Naive thymus-derived CD4-positive, alpha-beta T cell (primary cell): ENCODE measurements at regions of chr2 and their contacts with region 1.

Region 1: GRCh38 chr2:12106440-12107080 is 360.1 kb downstream of the LPIN1 start:
- DNase-seq: peak in 1 of 9 donors; percentile 40
- ATAC-seq: no peak
- H3K4me3 ChIP-seq: no peak overlapping the region
- H3K4me3 Mint-ChIP-seq: no peak overlapping the region
- H3K27ac ChIP-seq: no peak overlapping the region
- H3K27ac Mint-ChIP-seq: no peak overlapping the region
- H3K4me1 ChIP-seq: peaks cover 5 to 31% of the 10 kb centered on the region in 2 donors
- H3K4me1 Mint-ChIP-seq: peaks cover 16 to 57% (median 47%) of the 10 kb centered on the region in 7 donors
- H3K27me3 ChIP-seq: no peaks in the 10 kb centered on the region
- H3K27me3 Mint-ChIP-seq: no peaks in the 10 kb centered on the region

Region 2: GRCh38 chr2:10790228-10790979 is 1316.2 kb before region 1 on chr2:
- CTCF ChIA-PET with region 1: no interaction called
- POLR2A ChIA-PET with region 1: no interaction called
- intact Hi-C with region 1: no loop called
- DNase-seq: no peak
- ATAC-seq: peak; percentile 76
- H3K4me3 ChIP-seq: no peak overlapping the region
- H3K4me3 Mint-ChIP-seq: peak overlapping the region in 1 of 10 donors; percentile 5
- H3K27ac ChIP-seq: no peak overlapping the region
- H3K27ac Mint-ChIP-seq: peak overlapping the region in 8 of 9 donors; percentile 2 to 53 (median 34)
- H3K4me1 ChIP-seq: peaks cover 0 to 6% of the 10 kb centered on the region in 2 donors
- H3K4me1 Mint-ChIP-seq: peaks cover 0 to 18% (median 0%) of the 10 kb centered on the region in 7 donors
- H3K27me3 ChIP-seq: no peaks in the 10 kb centered on the region
- H3K27me3 Mint-ChIP-seq: no peaks in the 10 kb centered on the region

Region 3: DNA sequence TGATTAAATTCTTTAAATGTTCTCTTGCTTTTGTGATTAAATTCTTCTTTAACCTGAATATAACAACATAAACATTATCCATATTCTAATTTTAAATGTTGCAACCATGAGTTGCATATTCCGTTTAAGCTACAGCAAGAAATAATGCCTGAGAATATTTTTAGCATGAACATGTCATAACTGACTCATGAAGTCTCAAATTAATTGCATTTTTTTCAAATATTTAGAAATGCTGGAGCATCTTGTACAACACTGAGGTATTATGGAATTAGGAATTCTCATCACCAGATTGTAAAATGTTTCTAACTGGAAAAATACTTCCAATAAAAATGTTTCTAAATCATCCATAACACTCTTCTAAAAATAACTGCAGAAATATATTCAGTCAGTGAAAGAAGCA is 776.8 kb before region 1 on chr2:
- CTCF ChIA-PET with region 1: no interaction called
- POLR2A ChIA-PET with region 1: no interaction called
- intact Hi-C with region 1: no loop called
- DNase-seq: no peak
- ATAC-seq: no peak
- H3K4me3 ChIP-seq: no peak overlapping the region
- H3K4me3 Mint-ChIP-seq: no peak overlapping the region
- H3K27ac ChIP-seq: no peak overlapping the region
- H3K27ac Mint-ChIP-seq: no peak overlapping the region
- H3K4me1 ChIP-seq: no peaks in the 10 kb centered on the region
- H3K4me1 Mint-ChIP-seq: peaks cover 2 to 34% (median 29%) of the 10 kb centered on the region in 7 donors
- H3K27me3 ChIP-seq: no peaks in the 10 kb centered on the region
- H3K27me3 Mint-ChIP-seq: no peaks in the 10 kb centered on the region

Region 4: GRCh38 chr2:12096051-12096787 is 10.3 kb before region 1 on chr2:
- CTCF ChIA-PET with region 1: no interaction called
- POLR2A ChIA-PET with region 1: interaction called, 11 read pairs
- intact Hi-C with region 1: no loop called
- DNase-seq: no peak
- ATAC-seq: no peak
- H3K4me3 ChIP-seq: no peak overlapping the region
- H3K4me3 Mint-ChIP-seq: no peak overlapping the region
- H3K27ac ChIP-seq: no peak overlapping the region
- H3K27ac Mint-ChIP-seq: no peak overlapping the region
- H3K4me1 ChIP-seq: no peaks in the 10 kb centered on the region
- H3K4me1 Mint-ChIP-seq: peaks cover 0 to 12% (median 5%) of the 10 kb centered on the region in 7 donors
- H3K27me3 ChIP-seq: no peaks in the 10 kb centered on the region
- H3K27me3 Mint-ChIP-seq: peaks cover 0 to 6% (median 0%) of the 10 kb centered on the region in 5 donors

Region 5: DNA sequence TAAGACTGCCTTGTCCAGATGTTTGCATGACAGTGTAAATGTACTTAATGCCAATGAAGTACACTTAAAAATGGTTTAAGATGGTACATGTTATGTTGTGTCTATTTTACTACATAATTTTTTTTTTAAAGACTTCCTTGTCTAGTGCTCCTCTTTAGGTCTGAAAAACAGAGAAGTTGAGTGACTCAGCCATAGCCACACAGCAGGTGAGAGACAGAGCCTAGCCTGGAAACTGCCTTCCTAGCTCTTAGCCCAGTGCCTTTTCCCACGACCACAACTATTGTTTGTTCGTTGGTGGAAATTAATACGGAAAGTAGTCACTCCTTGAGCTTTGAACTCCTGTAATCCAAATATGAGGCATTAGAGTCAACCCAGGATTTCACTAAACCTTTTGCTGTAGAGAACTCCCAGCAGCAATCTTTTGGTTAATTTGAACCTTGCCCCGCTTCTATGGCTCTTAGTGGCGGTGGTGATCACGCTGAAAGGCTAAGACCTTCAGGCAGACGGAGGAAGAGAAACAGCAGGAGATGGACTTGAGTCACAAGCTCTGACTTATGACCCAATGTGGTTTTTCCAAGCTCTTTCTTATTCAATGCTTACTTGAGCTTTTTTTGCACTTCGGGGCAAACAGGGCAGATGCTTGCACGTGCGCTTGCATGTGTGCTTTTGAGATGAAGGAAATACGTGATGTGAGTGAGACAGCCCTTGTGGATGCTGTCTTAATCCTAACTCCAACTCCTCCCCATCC is 631.4 kb after region 1 on chr2:
- CTCF ChIA-PET with region 1: no interaction called
- POLR2A ChIA-PET with region 1: no interaction called
- intact Hi-C with region 1: no loop called
- DNase-seq: no peak
- ATAC-seq: no peak
- H3K4me3 ChIP-seq: no peak overlapping the region
- H3K4me3 Mint-ChIP-seq: no peak overlapping the region
- H3K27ac ChIP-seq: no peak overlapping the region
- H3K27ac Mint-ChIP-seq: peak overlapping the region in 6 of 9 donors; percentile 52 to 91 (median 80)
- H3K4me1 ChIP-seq: peaks cover 12 to 29% of the 10 kb centered on the region in 2 donors
- H3K4me1 Mint-ChIP-seq: peaks cover 23 to 74% (median 43%) of the 10 kb centered on the region in 7 donors
- H3K27me3 ChIP-seq: no peaks in the 10 kb centered on the region
- H3K27me3 Mint-ChIP-seq: no peaks in the 10 kb centered on the region